ENCODE measurements at regions of chr18 and their contacts with region 1.

Region 1: GRCh38 chr18:3593904-3594661 is 144.1 kb downstream of the TGIF1 start:
- DNase-seq: peak; percentile 96
- ATAC-seq: peak; percentile 80
- H3K4me3 ChIP-seq: peak overlapping the region; percentile 73 to 94 (median 78)
- H3K27ac ChIP-seq: peak overlapping the region; percentile 96
- H3K4me1 ChIP-seq: peaks cover 75% of the 10 kb centered on the region
- H3K27me3 ChIP-seq: no peaks in the 10 kb centered on the region; a peak in 1 of 5 replicates
- CTCF ChIP-seq: peak; percentile 80
- EP300 ChIP-seq: peak in 1 of 2 experiments; percentile 54; a peak in 1 of 4 replicates
- POLR2A ChIP-seq: peak; percentile 59 to 64
- RAD21 ChIP-seq: 0 out of 2 replicates have a peak, but pooled peaks have one; percentile 9

Region 2: GRCh38 chr18:3281456-3282400 is 312.4 kb before region 1 on chr18:
- CTCF ChIA-PET with region 1: no interaction called
- POLR2A ChIA-PET with region 1: interaction called, 3 read pairs
- in situ Hi-C with region 1: loop called (anchors 5 kb)
- intact Hi-C with region 1: loop called (anchors 2 kb)
- DNase-seq: peak; percentile 67
- ATAC-seq: peak; percentile 64
- H3K4me3 ChIP-seq: no peak overlapping the region
- H3K27ac ChIP-seq: no peak overlapping the region
- H3K4me1 ChIP-seq: peaks cover 32% of the 10 kb centered on the region
- H3K27me3 ChIP-seq: peaks cover 0 to 17% of the 10 kb centered on the region in 2 experiments; a peak in 3 of 5 replicates
- CTCF ChIP-seq: peak; percentile 71
- EP300 ChIP-seq: no peak
- POLR2A ChIP-seq: no peak
- RAD21 ChIP-seq: peak; percentile 63

Region 3: DNA sequence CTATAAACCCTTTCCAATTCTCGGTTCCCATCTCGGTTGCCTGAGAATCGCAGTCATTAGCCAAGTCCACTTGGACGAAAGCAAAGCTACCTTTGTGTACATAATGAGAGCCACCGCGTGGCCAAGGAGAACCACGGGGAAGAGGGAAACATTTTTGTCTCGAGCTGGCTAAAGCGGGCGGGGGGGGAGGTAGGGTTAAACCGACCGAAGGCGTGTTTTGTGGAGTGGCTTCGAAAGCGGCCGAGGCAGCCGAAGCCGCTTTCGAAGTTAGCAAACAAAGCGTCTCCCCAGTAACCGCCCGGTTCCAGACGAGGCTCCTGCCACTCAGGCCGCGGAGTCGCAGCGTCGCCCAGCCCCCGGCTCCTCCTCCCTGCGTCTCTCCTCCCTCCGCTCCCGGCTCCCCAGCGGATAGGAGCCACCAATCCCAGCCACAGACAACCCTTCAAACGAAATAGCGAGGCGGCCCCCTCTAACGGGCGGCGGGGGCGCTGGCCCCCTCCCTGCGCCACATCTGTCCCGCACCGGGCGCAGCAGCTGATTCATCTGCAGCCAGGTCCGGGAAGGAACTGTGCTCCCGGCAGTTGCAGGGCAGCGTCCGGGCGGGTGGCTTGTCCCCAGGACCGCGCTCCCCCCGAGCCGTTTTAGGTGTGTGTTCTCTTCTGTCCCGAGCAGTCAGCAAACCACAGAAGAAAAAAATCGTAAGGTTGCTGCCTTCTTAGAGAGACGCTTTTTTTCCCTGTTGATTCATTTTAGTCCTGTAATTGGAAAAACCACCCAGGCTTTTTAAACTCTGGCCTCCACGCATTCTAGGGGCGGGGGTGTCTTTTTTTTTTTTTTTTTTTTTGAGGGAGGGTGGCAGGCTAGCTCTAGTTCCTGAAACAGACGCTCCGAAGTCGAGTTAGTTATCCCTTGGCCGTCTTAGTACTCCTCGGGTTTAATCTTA is 145.9 kb before region 1 on chr18:
- CTCF ChIA-PET with region 1: no interaction called
- POLR2A ChIA-PET with region 1: interaction called, 79 read pairs
- in situ Hi-C with region 1: loop called (anchors 5 kb)
- intact Hi-C with region 1: loop called (anchors 2 kb)
- DNase-seq: peak; percentile 93
- ATAC-seq: peak; percentile 85
- H3K4me3 ChIP-seq: peak overlapping the region; percentile 68 to 93 (median 93)
- H3K27ac ChIP-seq: peak overlapping the region; percentile 88
- H3K4me1 ChIP-seq: peaks cover 19% of the 10 kb centered on the region
- H3K27me3 ChIP-seq: no peaks in the 10 kb centered on the region; a peak in 1 of 5 replicates
- CTCF ChIP-seq: peak; percentile 36
- EP300 ChIP-seq: peak in 1 of 2 experiments; percentile 44; a peak in 2 of 4 replicates
- POLR2A ChIP-seq: peak; percentile 84 to 90
- RAD21 ChIP-seq: peak; percentile 14; the same call in 1 of the 2 replicates

Region 4: DNA sequence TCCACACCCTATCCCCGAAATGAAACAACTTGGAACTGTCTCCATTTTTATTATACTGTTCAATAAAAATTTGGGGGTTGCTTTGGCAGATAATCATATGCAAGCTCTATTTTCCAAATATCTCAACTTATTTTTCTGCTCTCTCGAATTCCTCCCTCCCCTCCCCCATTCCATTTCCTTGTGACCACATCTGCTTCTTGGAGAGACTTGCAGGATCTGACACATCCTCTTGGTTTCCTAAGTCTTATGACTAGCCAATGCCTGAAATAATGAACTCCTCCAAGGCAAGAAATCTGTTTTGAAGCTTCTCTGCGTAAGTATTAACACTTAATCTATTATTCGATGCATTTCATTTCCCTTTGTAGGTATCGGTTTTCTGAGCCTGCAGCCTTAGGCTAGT is 128.0 kb before region 1 on chr18:
- CTCF ChIA-PET with region 1: no interaction called
- POLR2A ChIA-PET with region 1: no interaction called
- in situ Hi-C with region 1: no loop called
- intact Hi-C with region 1: no loop called
- DNase-seq: no peak
- ATAC-seq: no peak
- H3K4me3 ChIP-seq: no peak overlapping the region
- H3K27ac ChIP-seq: no peak overlapping the region
- H3K4me1 ChIP-seq: peaks cover 10% of the 10 kb centered on the region; the same call in 1 of the 2 replicates
- H3K27me3 ChIP-seq: no peaks in the 10 kb centered on the region
- CTCF ChIP-seq: no peak
- EP300 ChIP-seq: no peak
- POLR2A ChIP-seq: no peak
- RAD21 ChIP-seq: no peak

Region 5: GRCh38 chr18:3615374-3615985 is 21.4 kb after region 1 on chr18:
- CTCF ChIA-PET with region 1: no interaction called
- POLR2A ChIA-PET with region 1: interaction called, 107 read pairs
- in situ Hi-C with region 1: no loop called
- intact Hi-C with region 1: loop called (anchors 1 kb)
- DNase-seq: no peak
- ATAC-seq: no peak
- H3K4me3 ChIP-seq: no peak overlapping the region
- H3K27ac ChIP-seq: peak overlapping the region; percentile 39
- H3K4me1 ChIP-seq: peaks cover 79% of the 10 kb centered on the region
- H3K27me3 ChIP-seq: no peaks in the 10 kb centered on the region
- CTCF ChIP-seq: no peak
- EP300 ChIP-seq: no peak
- POLR2A ChIP-seq: no peak
- RAD21 ChIP-seq: no peak

Region 6: GRCh38 chr18:3652380-3653262 is 58.5 kb after region 1 on chr18:
- CTCF ChIA-PET with region 1: no interaction called
- POLR2A ChIA-PET with region 1: interaction called, 47 read pairs
- in situ Hi-C with region 1: no loop called
- intact Hi-C with region 1: no loop called
- DNase-seq: peak; percentile 96
- ATAC-seq: peak; percentile 83
- H3K4me3 ChIP-seq: 0 out of 6 replicates have a peak overlapping the region, but pooled peaks of 1 of the 3 experiments have one; percentile 7
- H3K27ac ChIP-seq: peak overlapping the region; percentile 67
- H3K4me1 ChIP-seq: peaks cover 88% of the 10 kb centered on the region
- H3K27me3 ChIP-seq: no peaks in the 10 kb centered on the region
- CTCF ChIP-seq: no peak
- EP300 ChIP-seq: peak in 1 of 2 experiments; percentile 86; a peak in 2 of 4 replicates
- POLR2A ChIP-seq: peak; percentile 49 to 78; a peak in 3 of 4 replicates
- RAD21 ChIP-seq: peak; percentile 19; the same call in 1 of the 2 replicates

Region 7: GRCh38 chr18:3703732-3704176 is 109.7 kb after region 1 on chr18:
- CTCF ChIA-PET with region 1: no interaction called
- POLR2A ChIA-PET with region 1: no interaction called
- in situ Hi-C with region 1: no loop called
- intact Hi-C with region 1: no loop called
- DNase-seq: peak; percentile 41
- ATAC-seq: peak; percentile 85
- H3K4me3 ChIP-seq: no peak overlapping the region
- H3K27ac ChIP-seq: no peak overlapping the region
- H3K4me1 ChIP-seq: peaks cover 11% of the 10 kb centered on the region
- H3K27me3 ChIP-seq: no peaks in the 10 kb centered on the region; a peak in 1 of 5 replicates
- CTCF ChIP-seq: peak; percentile 73
- EP300 ChIP-seq: no peak
- POLR2A ChIP-seq: no peak
- RAD21 ChIP-seq: peak; percentile 17; the same call in 1 of the 2 replicates

Measured in HepG2 (cell line).